ENCODE measurements at regions of chr6 and their contacts with region 1.

Region 1: DNA sequence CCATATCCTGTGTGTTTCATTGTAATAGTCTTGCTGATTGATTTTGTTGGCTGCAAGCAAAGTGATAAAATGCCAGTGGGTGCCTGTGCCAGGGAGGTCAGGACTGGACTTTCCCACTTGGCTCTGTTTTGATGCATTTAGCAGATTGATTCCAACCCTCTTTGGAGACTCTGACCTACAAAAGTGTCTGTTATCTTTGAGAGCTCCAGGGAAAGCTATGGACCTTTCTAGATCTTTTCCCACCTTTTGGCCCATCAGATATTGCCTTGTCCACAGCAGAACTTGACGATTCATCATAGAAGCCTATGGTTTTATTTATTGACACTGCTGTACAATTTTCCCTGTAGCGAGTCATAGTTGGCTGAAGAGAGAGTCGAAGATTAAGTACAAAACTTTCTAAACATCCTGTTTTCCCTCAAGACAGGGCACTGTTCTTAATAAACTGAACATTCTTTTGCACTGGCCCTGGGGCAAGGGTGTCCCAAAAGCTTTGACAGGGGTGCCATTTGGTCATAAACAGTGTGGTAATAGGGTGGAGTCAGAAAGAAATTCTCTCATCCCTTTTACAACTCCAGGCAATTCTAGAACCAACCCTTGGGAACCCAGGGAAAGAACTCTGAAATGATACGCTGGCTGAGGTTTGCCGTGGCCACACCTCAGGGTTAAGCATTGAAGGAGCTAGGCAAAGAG is 53.7 kb downstream of the E2F3 start:
- DNase-seq: no peak
- H3K4me3 Mint-ChIP-seq: no peak overlapping the region
- H3K27ac Mint-ChIP-seq: peak overlapping the region; percentile 67
- H3K4me1 Mint-ChIP-seq: peaks cover 40% of the 10 kb centered on the region
- H3K27me3 Mint-ChIP-seq: no peaks in the 10 kb centered on the region

Region 2: DNA sequence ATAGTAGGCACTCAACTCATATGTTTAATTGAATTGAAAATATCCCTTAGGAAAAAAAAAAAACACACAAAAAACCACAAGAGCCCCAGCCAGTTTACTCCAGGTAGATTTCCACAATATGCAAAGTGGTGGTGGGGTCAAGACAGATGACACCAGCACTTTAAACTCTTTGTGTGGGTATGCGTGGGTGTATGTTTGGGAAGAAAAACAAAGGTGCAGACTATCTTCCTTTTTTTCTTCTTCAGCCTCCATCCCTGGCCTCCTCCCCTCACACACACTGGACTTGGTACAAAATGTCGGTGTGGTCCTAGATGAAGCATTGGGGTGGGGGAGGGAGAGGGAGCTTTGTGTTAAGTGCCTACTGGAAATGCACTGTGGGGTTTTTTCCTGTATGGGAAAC is 36.7 kb after region 1 on chr6:
- intact Hi-C with region 1: loop called (anchors 1 kb)
- DNase-seq: no peak
- H3K4me3 Mint-ChIP-seq: no peak overlapping the region
- H3K27ac Mint-ChIP-seq: no peak overlapping the region
- H3K4me1 Mint-ChIP-seq: peaks cover under 1% of the 10 kb centered on the region
- H3K27me3 Mint-ChIP-seq: no peaks in the 10 kb centered on the region

Measured in activated T-helper 2 cell treated with anti-CD3 and anti-CD28 coated beads, Interferon-gamma antibody, Interleukin-2, Interleukin-4, amounts not matched to agents 10 μg/mL and 5 μg/mL and 100 μg/mL, durations not matched to agents 14 hours and 24 hours and 36 hours (primary cell).